ENCODE measurements at regions of chr10 and their contacts with region 1.

Region 1: DNA sequence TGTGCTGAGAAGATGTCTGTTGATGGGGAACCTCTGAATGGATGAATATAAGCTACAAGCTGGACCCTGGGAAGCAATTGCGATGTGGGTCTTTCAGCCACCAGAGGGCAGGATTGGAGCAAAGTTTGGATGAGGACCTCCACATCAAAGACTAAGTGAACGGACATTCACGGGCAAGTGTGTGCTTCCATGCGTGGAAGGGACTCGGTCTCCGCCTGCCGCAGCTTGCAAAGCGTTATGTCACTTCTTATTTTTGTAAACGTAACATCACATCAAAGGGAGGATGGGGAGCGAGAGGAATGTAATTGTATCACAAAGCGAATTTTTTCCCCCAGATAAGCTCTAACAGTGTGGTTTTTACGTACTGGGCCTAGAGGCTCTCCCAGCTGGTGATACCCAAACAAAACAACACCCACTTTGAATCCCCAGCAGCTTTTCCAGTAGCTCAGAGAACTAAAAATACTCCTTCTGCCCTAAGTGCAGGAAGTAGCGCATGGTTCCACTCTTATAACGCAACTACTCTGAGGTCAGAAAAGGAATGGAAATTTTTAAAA is 65.0 kb downstream of the VWA2 start:
- DNase-seq: peak; percentile 85
- H3K4me3 Mint-ChIP-seq: peak overlapping the region; percentile 69
- H3K27ac Mint-ChIP-seq: peak overlapping the region; percentile 15
- H3K4me1 Mint-ChIP-seq: peaks cover 9% of the 10 kb centered on the region
- H3K27me3 Mint-ChIP-seq: no peaks in the 10 kb centered on the region

Region 2: GRCh38 chr10:113802997-113803396 is 501.1 kb before region 1 on chr10:
- CTCF ChIA-PET with region 1: interaction called, 11 read pairs
- POLR2A ChIA-PET with region 1: no interaction called
- intact Hi-C with region 1: no loop called
- DNase-seq: no peak
- H3K4me3 Mint-ChIP-seq: no peak overlapping the region
- H3K27ac Mint-ChIP-seq: no peak overlapping the region
- H3K4me1 Mint-ChIP-seq: no peaks in the 10 kb centered on the region
- H3K27me3 Mint-ChIP-seq: peaks cover 14% of the 10 kb centered on the region

Region 3: DNA sequence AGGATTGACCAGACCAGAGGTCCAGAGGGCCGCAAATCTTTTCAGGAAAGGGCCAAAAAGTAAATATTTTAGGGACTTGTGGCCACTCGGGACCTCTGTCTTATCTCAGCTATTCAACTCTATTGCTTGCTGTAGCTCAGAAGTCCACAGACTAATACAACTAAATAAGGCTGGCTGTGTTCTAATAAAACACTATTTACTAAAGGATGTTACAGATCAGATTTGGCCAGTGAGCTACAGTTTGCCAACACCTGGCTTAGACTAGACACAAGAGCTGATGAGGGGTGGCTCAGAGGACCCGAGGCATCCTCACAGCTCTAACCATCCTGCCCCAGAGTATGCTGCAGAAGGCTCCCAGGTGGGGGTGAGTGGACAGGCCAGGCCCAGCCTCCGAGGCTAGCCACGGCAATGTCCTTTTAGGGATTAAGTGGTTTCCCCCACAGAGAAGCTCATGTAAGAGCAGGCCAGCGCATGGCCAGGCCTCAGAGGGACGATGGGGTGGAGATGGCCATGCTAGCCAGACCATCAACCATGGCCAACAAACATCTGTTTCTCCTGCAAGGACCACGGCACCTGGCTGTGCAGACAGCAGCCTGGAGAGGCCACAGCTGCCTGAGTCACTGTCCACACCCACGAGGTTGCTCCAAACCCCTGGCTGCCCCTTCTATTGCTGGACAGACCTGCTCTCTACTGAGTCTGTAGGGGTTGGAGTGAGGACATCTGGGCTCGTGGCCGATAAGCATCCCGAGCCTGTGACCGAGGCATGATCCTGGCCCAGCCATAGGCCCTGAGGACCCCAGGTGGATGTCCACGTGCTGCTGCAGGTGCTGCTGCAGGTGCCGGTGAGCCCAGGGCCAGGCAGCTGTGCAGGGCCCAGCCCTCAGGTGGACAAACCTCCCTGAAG is 23.7 kb after region 1 on chr10:
- CTCF ChIA-PET with region 1: interaction called, 19 read pairs
- POLR2A ChIA-PET with region 1: no interaction called
- intact Hi-C with region 1: no loop called
- DNase-seq: no peak
- H3K4me3 Mint-ChIP-seq: no peak overlapping the region
- H3K27ac Mint-ChIP-seq: no peak overlapping the region
- H3K4me1 Mint-ChIP-seq: no peaks in the 10 kb centered on the region
- H3K27me3 Mint-ChIP-seq: no peaks in the 10 kb centered on the region

Region 4: GRCh38 chr10:114437456-114438292 is 133.6 kb after region 1 on chr10:
- CTCF ChIA-PET with region 1: interaction called, 19 read pairs
- POLR2A ChIA-PET with region 1: no interaction called
- intact Hi-C with region 1: no loop called
- DNase-seq: no peak
- H3K4me3 Mint-ChIP-seq: no peak overlapping the region
- H3K27ac Mint-ChIP-seq: no peak overlapping the region
- H3K4me1 Mint-ChIP-seq: no peaks in the 10 kb centered on the region
- H3K27me3 Mint-ChIP-seq: no peaks in the 10 kb centered on the region

Region 5: GRCh38 chr10:114550756-114551635 is 246.9 kb after region 1 on chr10:
- CTCF ChIA-PET with region 1: interaction called, 19 read pairs
- POLR2A ChIA-PET with region 1: no interaction called
- intact Hi-C with region 1: loop called (anchors 1 kb)
- DNase-seq: no peak
- H3K4me3 Mint-ChIP-seq: no peak overlapping the region
- H3K27ac Mint-ChIP-seq: peak overlapping the region; percentile 15
- H3K4me1 Mint-ChIP-seq: peaks cover 16% of the 10 kb centered on the region
- H3K27me3 Mint-ChIP-seq: no peaks in the 10 kb centered on the region

Region 6: DNA sequence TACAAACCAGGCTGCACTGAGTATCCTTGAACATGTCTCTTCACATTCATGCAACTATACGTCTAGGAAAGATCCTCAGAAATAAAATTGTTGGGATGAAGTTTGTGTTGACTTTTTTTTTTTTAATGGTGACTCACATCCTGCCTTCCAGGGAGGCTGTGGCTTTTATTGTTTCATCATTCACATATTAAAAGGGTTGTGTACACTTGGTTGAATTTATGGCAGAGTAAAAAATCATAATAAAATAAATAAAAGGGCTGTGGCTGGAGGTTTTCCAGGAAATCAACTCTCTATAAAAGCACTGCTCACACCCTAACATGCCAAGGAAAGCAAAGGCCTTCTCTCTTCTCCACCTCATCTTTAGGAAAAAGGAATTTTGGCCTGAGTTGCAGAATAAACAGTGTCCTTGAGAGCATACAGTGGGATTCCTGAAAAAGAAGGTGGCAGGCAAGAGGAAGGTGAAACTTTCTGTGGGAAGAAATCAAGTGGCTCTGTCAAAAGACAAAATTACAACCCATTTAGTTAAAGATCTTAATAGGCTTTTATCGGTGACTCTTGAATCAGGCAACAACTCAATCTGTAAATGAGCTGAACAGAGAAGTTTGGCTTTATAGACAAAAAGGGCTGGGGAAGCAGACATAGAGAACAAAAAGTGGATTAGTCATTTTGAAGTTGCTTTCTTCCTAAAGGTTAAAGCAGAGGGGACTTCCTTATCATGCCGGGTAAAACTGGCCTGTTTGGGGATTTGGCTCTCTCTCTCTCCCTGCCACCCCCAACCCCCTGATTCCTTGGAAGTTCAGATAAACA is 475.9 kb after region 1 on chr10:
- CTCF ChIA-PET with region 1: interaction called, 33 read pairs
- POLR2A ChIA-PET with region 1: no interaction called
- intact Hi-C with region 1: no loop called
- DNase-seq: no peak
- H3K4me3 Mint-ChIP-seq: no peak overlapping the region
- H3K27ac Mint-ChIP-seq: no peak overlapping the region
- H3K4me1 Mint-ChIP-seq: peaks cover 7% of the 10 kb centered on the region
- H3K27me3 Mint-ChIP-seq: no peaks in the 10 kb centered on the region

Measured in activated CD4-positive, alpha-beta memory T cell treated with anti-CD3 and anti-CD28 coated beads for 36 hours (primary cell).